Naive thymus-derived CD8-positive, alpha-beta T cell (primary cell): ENCODE measurements at regions of chr2 and their contacts with region 1.

Region 1: DNA sequence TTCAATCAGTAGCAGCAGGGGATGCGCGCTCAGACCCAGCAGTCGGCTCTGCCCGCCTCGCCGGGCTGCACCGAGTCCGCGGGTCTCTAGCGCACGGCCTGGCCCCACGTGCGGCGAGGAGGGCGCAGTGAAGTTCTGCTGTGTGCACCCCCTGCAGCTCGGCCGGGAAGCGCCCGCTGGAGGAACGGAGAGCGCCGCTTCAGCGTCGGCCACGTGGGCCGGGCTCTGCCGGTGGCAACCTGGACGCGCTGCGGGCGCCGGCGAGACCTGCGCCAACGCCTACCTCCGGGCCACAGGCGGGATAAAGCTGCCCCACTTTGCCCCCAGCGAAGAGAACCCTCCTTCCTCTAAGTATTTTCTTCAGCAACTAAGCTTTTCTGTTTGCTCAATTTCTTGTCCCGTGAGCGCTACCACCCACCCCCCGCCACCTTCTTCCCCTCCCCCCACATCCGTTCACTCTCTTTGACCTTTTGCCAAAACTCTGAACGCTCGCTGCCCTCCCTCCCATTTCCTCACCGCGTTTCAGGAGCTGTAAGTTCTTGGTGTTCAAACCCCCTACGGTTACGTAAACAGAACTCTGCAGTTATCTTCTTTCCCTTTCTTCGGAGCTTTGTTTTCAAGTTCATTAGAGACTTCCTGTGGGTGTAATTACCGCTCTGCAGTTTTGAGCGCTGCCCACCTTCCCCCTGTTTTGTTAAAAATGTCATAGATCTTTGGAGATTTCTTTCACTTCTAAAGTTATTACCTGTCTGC is 42.6 kb upstream of the EDAR start:
- DNase-seq: peak; percentile 51 to 96 (median 84)
- ATAC-seq: peak; percentile 72 to 83
- H3K4me3 Mint-ChIP-seq: peak overlapping the region; percentile 51 to 90 (median 72)
- H3K27ac Mint-ChIP-seq: peak overlapping the region; percentile 84 to 99 (median 97)
- H3K4me1 Mint-ChIP-seq: peaks cover 25 to 83% (median 72%) of the 10 kb centered on the region in 4 donors
- H3K27me3 Mint-ChIP-seq: no peaks in the 10 kb centered on the region

Region 2: GRCh38 chr2:108960006-108960405 is 71.6 kb before region 1 on chr2:
- POLR2A ChIA-PET with region 1: interaction called, 31 read pairs
- DNase-seq: no peak
- ATAC-seq: no peak
- H3K4me3 Mint-ChIP-seq: peak overlapping the region in 5 of 10 donors; percentile 23 to 83 (median 33)
- H3K27ac Mint-ChIP-seq: peak overlapping the region; percentile 25 to 92 (median 65)
- H3K4me1 Mint-ChIP-seq: peaks cover 48 to 83% (median 76%) of the 10 kb centered on the region in 4 donors
- H3K27me3 Mint-ChIP-seq: no peaks in the 10 kb centered on the region

Region 3: DNA sequence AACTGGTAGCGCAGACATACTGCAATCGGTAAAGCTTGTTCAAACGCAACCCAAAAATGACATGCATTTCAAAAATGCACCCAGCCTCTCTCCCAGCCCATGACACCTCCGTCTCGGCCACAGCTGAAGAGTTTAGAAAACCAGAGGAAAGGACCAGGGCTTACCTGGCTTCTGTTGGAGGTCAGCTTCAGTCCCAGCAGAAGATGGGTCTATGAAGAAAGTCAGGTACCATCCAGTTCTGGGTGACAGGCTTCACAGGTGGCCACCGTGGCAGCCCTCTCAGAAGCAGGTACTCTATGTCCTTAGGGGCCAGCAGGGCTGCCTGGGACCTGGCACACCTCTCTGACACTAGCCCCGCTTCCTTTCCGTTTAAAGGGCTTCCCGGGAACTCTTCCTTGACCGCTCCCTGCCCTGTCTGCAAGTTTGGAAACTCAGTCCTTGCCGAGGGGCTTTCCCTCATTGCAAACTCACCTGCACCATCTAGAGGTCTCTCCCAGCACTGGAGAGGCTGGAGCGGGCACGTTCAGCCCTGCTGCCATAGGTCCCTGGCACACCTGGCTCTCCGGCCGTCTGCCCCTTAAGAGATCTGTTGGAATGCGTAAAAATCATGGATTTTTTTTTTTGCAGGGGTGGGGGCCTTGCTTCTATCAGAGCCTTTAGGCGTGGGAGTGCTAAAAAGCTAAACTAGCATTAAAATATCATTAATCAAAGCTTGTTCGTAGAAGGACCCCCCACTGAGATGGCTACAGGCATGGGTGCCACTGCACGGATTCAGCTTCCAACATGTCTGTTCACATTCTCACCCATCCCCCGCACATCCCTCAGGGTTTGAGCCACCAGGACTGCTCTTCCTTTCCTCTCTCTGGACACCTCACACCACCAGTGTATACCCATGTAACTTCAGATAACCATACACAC is 42.6 kb before region 1 on chr2 and contains the start of gene EDAR:
- POLR2A ChIA-PET with region 1: interaction called, 32 read pairs
- DNase-seq: peak; percentile 27 to 74 (median 50)
- ATAC-seq: peak; percentile 72 to 82
- H3K4me3 Mint-ChIP-seq: peak within 1 kb of the TSS; percentile 78 to 96 (median 88)
- H3K27ac Mint-ChIP-seq: peak within 1 kb of the TSS; percentile 74 to 93 (median 89)
- H3K4me1 Mint-ChIP-seq: peaks cover 27 to 72% (median 58%) of the 10 kb centered on the region in 4 donors
- H3K27me3 Mint-ChIP-seq: no peaks in the 10 kb centered on the region
- polyA plus RNA-seq, gene EDAR: 2.8 to 11.8 (median 5.4) TPM

Region 4: GRCh38 chr2:109020217-109020637 is 11.4 kb before region 1 on chr2:
- POLR2A ChIA-PET with region 1: interaction called, 29 read pairs
- DNase-seq: peak in 3 of 10 donors; percentile 41 to 57 (median 53)
- ATAC-seq: peak; percentile 81 to 98
- H3K4me3 Mint-ChIP-seq: peak overlapping the region in 4 of 10 donors; percentile 21 to 49 (median 36)
- H3K27ac Mint-ChIP-seq: peak overlapping the region in 7 of 10 donors; percentile 13 to 90 (median 71)
- H3K4me1 Mint-ChIP-seq: peaks cover 15 to 37% (median 25%) of the 10 kb centered on the region in 4 donors
- H3K27me3 Mint-ChIP-seq: no peaks in the 10 kb centered on the region

Region 5: GRCh38 chr2:109079590-109079989 is 47.9 kb after region 1 on chr2:
- POLR2A ChIA-PET with region 1: interaction called, 11 read pairs
- DNase-seq: no peak
- ATAC-seq: no peak
- H3K4me3 Mint-ChIP-seq: no peak overlapping the region
- H3K27ac Mint-ChIP-seq: peak overlapping the region in 3 of 10 donors; percentile 6 to 92 (median 24)
- H3K4me1 Mint-ChIP-seq: peaks cover 7 to 19% (median 10%) of the 10 kb centered on the region in 4 donors
- H3K27me3 Mint-ChIP-seq: no peaks in the 10 kb centered on the region

Region 6: DNA sequence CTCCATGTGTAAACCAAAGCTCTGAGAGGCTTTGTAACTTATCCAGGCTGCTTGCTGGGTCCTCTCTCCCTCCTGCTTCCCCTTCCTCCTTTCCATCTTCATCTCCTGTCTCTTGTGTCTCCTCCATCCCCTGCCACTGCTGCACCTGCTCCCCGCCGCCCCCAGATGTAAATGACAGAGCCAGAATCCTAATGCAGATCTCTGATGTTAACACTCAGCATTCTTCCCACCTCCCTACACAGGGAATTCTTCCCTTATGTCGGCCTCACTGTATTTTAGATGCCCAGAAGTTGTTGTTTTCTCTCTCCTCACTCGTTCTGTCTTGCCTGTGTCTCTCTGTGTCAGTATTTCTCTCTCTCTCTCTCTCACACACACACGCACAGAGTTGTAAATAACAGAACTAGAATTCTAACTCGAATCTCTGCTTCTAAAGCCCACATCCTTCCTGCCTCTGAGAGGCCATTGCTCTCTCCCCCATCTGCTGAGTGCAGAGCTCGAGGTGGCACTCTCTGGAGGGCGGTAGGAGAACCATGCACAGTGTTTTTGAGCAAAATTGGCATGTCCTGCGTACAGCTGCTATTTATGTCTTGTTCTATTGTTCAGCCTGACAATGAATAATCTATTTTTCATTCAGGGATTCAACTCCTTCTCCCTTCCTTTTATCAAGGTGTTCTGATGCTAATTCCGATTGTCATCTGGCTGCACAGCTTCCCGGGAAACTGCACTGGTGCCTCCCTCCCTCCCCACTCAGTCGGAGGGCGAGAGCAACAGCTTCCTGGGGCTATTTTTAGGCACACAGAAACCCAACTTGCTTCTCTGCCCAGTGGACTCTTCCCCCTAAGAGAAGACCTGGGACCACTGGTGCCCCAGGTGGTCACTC is 317.3 kb after region 1 on chr2:
- POLR2A ChIA-PET with region 1: interaction called, 14 read pairs
- DNase-seq: peak; percentile 18 to 84 (median 67)
- ATAC-seq: peak; percentile 99
- H3K4me3 Mint-ChIP-seq: peak overlapping the region; percentile 62 to 86 (median 74)
- H3K27ac Mint-ChIP-seq: peak overlapping the region; percentile 82 to 98 (median 94)
- H3K4me1 Mint-ChIP-seq: peaks cover 30 to 75% (median 61%) of the 10 kb centered on the region in 4 donors
- H3K27me3 Mint-ChIP-seq: no peaks in the 10 kb centered on the region